ENCODE measurements at regions of chr5 and their contacts with region 1.

Region 1: DNA sequence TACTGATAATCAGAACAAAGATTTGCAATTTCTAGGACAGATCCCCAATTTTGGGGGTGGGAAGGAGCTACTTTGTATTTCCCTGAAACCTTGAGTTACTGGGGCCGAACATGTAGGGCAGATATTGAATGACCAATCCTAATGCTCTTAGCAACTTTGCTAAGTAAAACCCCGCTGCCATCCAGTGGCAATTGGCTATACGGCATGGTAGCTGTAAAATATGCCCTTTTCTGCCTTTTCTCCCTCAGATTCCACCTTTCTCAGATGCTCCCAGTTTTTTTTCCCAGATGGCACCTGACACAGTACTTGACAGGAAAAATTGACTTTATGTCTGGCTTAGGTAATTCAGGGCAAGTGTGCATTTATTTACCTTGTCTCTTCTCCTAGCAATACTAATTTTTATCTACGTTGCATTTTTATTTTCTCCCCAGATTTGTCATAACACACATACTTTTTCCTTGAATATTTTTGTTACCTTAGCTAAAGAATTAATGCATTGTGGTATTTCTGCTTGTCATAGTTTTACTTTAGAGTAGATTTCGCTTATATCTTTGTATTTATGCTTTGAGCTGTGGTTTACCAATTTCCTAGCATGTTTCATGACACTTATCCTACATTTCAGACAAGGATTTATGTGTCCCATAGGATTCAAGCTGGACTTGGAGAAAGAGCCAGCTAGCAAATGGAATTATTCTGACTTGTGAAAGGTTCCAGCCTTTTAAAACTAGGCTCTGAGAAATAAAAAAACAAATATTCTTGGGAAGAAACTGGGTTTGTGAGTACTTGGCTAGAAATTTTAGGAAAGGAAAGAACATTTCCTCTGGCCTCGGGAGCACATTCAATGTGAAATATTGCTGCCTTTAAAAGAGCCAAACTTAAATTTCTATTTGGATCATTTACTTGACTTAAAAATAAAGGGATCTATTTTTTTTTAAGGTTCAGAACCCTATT is 37.4 kb downstream of the PIK3R1 start:
- DNase-seq: peak; percentile 80
- H3K4me3 ChIP-seq: no peak overlapping the region
- H3K27ac ChIP-seq: peak overlapping the region in 1 of 2 donors; percentile 62
- H3K4me1 ChIP-seq: peaks cover 61% of the 10 kb centered on the region
- H3K27me3 ChIP-seq: no peaks in the 10 kb centered on the region
- CTCF ChIP-seq: peak; percentile 53 to 75 (median 69)
- POLR2A ChIP-seq: no peak

Region 2: DNA sequence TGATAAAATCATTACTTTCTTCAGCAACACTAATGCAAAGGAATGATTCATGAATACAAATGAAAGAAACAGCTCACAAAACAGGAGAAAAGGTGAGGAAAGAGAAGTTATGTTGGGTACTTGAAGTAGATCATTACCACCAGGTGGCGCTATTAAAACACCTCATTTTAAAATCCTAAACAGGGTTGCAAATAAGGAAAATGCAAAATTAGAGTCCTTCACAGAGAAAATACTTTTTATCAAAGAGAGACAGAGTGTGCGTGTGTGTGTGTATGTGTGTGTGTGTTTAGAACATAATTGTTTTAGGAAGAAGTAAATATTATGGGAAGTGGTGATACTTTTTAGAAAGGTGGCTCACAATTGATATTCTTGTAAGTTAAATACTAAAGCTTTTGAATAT is 1006.8 kb before region 1 on chr5:
- intact Hi-C with region 1: loop called (anchors 10 kb)
- DNase-seq: peak; percentile 32
- H3K4me3 ChIP-seq: no peak overlapping the region
- H3K27ac ChIP-seq: peak overlapping the region in 1 of 2 donors; percentile 52
- H3K4me1 ChIP-seq: no peaks in the 10 kb centered on the region
- H3K27me3 ChIP-seq: no peaks in the 10 kb centered on the region
- CTCF ChIP-seq: peak; percentile 80 to 92 (median 88)
- POLR2A ChIP-seq: no peak